GM12878 (cell line): ENCODE measurements at regions of chr10 and their contacts with region 1.

Region 1: DNA sequence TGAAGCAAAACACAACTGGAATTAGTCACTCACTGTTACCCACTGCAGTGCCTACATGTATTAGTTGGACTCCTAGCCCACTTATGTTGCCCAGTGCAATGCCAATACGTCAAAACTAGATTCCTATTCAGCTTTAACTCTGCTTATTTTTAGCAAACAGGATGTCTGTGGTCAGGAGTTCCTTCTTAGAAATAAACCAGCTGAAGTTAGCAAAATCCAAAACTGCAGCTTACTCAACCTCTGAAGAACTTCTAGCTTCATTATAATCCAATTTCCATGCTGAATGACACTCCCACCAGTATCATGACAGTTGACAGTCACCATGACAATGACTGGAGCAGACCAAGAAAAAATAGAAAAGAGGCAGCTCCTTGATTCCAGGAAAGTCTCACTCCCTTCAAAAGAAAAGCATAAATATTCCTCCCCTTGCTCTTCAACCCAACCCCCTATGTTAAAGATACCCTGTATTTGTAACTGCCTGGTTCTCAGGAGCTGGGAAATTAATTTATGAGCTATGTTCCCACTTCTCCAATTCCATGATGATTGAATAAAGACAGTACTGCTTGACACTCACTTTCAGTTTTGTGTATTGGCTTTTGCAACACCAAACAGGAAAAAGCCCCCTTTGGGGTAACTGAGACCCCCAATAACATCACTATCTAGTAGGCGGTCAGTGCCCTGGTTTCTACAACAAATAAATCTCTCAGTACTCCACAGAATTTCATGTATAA is 327.4 kb downstream of the SORCS1 start:
- DNase-seq: peak; percentile 83
- ATAC-seq: peak; percentile 98
- H3K4me3 ChIP-seq: no peak overlapping the region
- H3K27ac ChIP-seq: no peak overlapping the region
- H3K4me1 ChIP-seq: peaks cover 7% of the 10 kb centered on the region
- H3K27me3 ChIP-seq: no peaks in the 10 kb centered on the region
- CTCF ChIP-seq: no peak
- EP300 ChIP-seq: no peak; a peak in 1 of 4 replicates
- POLR2A ChIP-seq: no peak
- RAD21 ChIP-seq: no peak

Region 2: DNA sequence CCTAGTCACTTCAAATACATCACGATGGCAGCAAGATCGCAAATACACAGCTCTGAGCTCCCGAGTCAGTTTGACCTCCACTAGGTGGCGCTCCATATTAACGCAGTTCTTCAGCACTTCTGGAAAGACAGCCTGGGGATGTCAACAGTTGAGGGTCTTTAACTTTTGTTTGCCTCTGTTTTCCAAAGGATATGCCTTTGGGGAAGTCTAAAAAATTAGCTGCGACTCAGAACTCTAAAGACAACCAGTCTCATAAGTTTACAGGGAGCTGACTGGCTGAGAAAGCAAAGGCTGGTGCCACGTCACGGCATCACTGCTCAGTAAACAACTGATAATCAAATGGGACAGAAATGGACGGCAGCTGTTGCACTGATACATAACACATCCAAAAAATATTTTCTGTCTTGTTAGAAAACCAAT is 131.4 kb before region 1 on chr10:
- CTCF ChIA-PET with region 1: no interaction called
- POLR2A ChIA-PET with region 1: no interaction called
- RAD21 ChIA-PET with region 1: no interaction called
- SMC1A ChIA-PET with region 1: no interaction called
- in situ Hi-C with region 1: no loop called
- intact Hi-C with region 1: no loop called
- DNase-seq: no peak
- ATAC-seq: peak; percentile 94
- H3K4me3 ChIP-seq: no peak overlapping the region
- H3K27ac ChIP-seq: no peak overlapping the region
- H3K4me1 ChIP-seq: no peaks in the 10 kb centered on the region
- H3K27me3 ChIP-seq: no peaks in the 10 kb centered on the region; a peak in 1 of 4 replicates
- CTCF ChIP-seq: peak; percentile 76 to 83 (median 78)
- EP300 ChIP-seq: no peak
- POLR2A ChIP-seq: no peak
- RAD21 ChIP-seq: peak; percentile 86

Region 3: DNA sequence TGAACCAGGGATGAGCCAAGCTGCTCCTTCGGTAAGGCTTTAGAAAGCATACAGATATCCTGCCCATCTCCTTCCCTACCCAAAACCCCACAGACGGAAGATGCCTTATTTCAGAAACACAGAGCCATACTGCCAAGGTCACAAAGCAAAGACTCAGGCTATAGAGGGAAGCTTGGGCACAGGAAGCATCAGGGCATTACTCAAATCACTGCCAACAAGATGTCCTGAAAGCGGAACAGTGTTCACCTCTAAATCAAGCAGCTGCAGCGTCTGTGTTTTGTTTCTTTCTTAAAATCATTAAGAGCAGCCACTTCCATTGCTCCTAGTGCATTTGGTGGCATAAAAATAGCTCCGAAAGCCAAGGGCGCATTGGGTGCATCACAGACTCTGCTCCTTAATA is 20.1 kb after region 1 on chr10:
- CTCF ChIA-PET with region 1: interaction called, 4 read pairs
- POLR2A ChIA-PET with region 1: interaction called, 10 read pairs
- RAD21 ChIA-PET with region 1: no interaction called
- SMC1A ChIA-PET with region 1: interaction called, 3 read pairs
- in situ Hi-C with region 1: no loop called
- intact Hi-C with region 1: no loop called
- DNase-seq: no peak
- ATAC-seq: peak; percentile 49; the same call in 2 of the 3 replicates
- H3K4me3 ChIP-seq: no peak overlapping the region
- H3K27ac ChIP-seq: no peak overlapping the region
- H3K4me1 ChIP-seq: no peaks in the 10 kb centered on the region
- H3K27me3 ChIP-seq: no peaks in the 10 kb centered on the region
- CTCF ChIP-seq: no peak
- EP300 ChIP-seq: no peak
- POLR2A ChIP-seq: no peak
- RAD21 ChIP-seq: no peak

Region 4: DNA sequence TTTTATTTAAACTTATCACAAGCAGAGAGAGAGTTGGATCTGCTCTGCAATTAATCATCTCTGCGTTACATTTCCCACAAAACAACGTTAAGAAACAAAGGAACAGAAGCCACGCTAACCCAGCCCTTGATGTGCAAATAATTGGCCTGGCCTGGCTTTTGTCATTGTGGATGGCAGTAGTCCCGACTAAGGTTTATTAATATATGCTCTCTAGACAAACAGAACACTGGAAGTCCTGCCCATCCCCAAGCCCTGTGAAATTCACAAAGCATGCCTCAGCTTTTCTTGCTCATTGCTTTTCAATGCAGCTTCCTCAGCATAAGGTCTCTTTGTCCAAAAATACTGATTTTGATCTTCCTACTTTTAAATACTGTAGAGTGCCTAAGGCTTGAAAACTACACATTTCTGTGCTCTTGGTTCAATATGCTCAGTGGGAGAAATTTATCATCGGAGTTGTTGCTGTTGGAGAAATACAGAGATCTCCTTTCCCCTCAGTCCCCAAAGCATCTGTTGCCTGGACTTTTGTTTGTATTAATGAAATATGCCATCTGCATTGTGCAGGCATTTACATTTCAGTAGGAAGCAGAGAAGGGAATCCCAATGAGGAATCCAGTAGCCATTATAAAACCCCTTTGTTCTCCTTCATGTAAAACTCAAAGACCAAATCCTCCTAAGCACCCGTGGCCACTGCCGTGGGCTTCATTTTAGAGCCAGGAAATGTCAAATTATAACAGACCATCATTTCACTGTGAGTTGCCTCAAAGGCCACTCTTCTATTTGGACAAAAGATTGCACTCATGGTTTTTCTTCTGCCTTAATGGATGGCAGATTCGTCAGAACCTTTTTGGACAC is 266.3 kb after region 1 on chr10:
- CTCF ChIA-PET with region 1: no interaction called
- POLR2A ChIA-PET with region 1: no interaction called
- RAD21 ChIA-PET with region 1: no interaction called
- SMC1A ChIA-PET with region 1: no interaction called
- in situ Hi-C with region 1: no loop called
- intact Hi-C with region 1: no loop called
- DNase-seq: no peak
- ATAC-seq: no peak
- H3K4me3 ChIP-seq: no peak overlapping the region
- H3K27ac ChIP-seq: no peak overlapping the region
- H3K4me1 ChIP-seq: no peaks in the 10 kb centered on the region
- H3K27me3 ChIP-seq: no peaks in the 10 kb centered on the region
- CTCF ChIP-seq: no peak
- EP300 ChIP-seq: no peak
- POLR2A ChIP-seq: no peak
- RAD21 ChIP-seq: no peak